ENCODE measurements at regions of chr1 and their contacts with region 1.

Region 1: GRCh38 chr1:155961937-155962336 is 16.4 kb downstream of the ARHGEF2 start:
- DNase-seq: no peak
- ATAC-seq: no peak
- H3K4me3 ChIP-seq: no peak overlapping the region
- H3K4me3 Mint-ChIP-seq: peak overlapping the region; percentile 59
- H3K27ac ChIP-seq: peak overlapping the region; percentile 28 to 69
- H3K27ac Mint-ChIP-seq: peak overlapping the region; percentile 82
- H3K4me1 ChIP-seq: peaks cover 41 to 68% of the 10 kb centered on the region in 2 donors
- H3K4me1 Mint-ChIP-seq: peaks cover 66% of the 10 kb centered on the region
- H3K27me3 ChIP-seq: no peaks in the 10 kb centered on the region
- H3K27me3 Mint-ChIP-seq: no peaks in the 10 kb centered on the region
- CTCF ChIP-seq: no peak

Region 2: DNA sequence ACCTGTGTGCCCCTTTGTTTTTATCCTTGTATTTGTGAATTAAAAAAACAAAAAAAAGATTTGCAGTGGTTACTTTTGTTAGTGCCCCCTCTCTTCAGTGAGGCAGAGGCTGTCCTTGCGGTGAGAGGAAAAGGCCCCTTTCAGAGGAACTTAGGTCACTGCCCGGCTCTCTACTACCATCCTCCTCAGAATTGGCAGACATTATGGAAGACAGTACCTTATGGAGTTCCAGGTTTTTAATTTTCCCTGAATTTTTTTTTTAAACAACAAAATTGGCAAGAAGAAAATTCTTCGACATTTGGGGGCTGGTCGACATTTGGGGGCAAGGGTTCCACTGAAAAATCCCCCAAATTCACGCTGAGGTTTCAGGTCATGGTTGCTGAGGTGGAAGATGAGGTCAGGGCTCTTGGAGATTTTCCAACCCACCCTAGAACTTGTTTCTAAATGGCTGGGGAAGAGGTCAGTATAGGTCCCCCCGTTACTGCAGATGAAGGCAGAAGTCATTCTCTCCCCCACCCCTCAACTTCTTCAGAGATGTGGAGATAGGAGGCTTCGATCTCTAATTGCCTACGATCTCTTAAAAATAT is 15.2 kb before region 1 on chr1:
- CTCF ChIA-PET with region 1: interaction called, 24 read pairs
- POLR2A ChIA-PET with region 1: interaction called, 17 read pairs
- intact Hi-C with region 1: loop called (anchors 1 kb)
- DNase-seq: no peak
- ATAC-seq: peak; percentile 11
- H3K4me3 ChIP-seq: peak overlapping the region in 1 of 5 experiments; percentile 4
- H3K4me3 Mint-ChIP-seq: peak overlapping the region; percentile 9
- H3K27ac ChIP-seq: peak overlapping the region; percentile 76 to 89
- H3K27ac Mint-ChIP-seq: peak overlapping the region; percentile 92
- H3K4me1 ChIP-seq: peaks cover 55 to 60% of the 10 kb centered on the region in 2 donors
- H3K4me1 Mint-ChIP-seq: peaks cover 56% of the 10 kb centered on the region
- H3K27me3 ChIP-seq: no peaks in the 10 kb centered on the region
- H3K27me3 Mint-ChIP-seq: no peaks in the 10 kb centered on the region
- CTCF ChIP-seq: no peak

Region 3: GRCh38 chr1:156060937-156061636 is 99.2 kb after region 1 on chr1 and contains the start of gene RAB25:
- CTCF ChIA-PET with region 1: no interaction called
- POLR2A ChIA-PET with region 1: no interaction called
- intact Hi-C with region 1: no loop called
- DNase-seq: peak; percentile 15
- ATAC-seq: no peak
- H3K4me3 ChIP-seq: no peak within 1 kb of the TSS
- H3K4me3 Mint-ChIP-seq: no peak within 1 kb of the TSS
- H3K27ac ChIP-seq: no peak within 1 kb of the TSS
- H3K27ac Mint-ChIP-seq: no peak within 1 kb of the TSS
- H3K4me1 ChIP-seq: peaks cover 0 to 3% of the 10 kb centered on the region in 2 donors
- H3K4me1 Mint-ChIP-seq: peaks cover 5% of the 10 kb centered on the region
- H3K27me3 ChIP-seq: no peaks in the 10 kb centered on the region
- H3K27me3 Mint-ChIP-seq: no peaks in the 10 kb centered on the region
- CTCF ChIP-seq: no peak
- total RNA-seq, gene RAB25: 0.69 and 1.1 TPM in 2 replicates